ENCODE measurements at regions of chr5 and their contacts with region 1.

Region 1: GRCh38 chr5:73201547-73202513 is 28.8 kb downstream of the TMEM174 start:
- DNase-seq: peak; percentile 21 to 89 (median 72)

Region 2: DNA sequence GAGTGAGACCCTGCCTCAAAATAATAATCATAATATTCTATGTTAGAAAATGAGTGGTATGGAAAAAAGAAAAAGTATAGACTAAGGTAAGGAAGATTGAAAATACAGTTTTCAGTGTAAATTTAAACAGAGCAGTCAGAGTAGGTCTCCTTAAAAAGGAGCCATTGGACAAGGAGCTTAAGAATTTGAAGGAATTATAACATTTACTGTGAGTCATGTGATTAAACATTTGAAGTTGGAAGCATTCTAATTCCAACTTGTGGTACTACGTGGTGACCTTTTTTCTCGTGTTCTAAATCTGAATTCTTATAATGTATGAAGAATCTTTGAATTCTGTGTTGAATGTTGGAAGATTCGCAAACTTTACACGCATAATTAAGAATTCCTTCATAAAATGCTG is 120.7 kb before region 1 on chr5:
- intact Hi-C with region 1: loop called (anchors 5 kb)
- DNase-seq: no peak

Region 3: GRCh38 chr5:73482383-73483136 is 280.7 kb after region 1 on chr5:
- intact Hi-C with region 1: no loop called
- DNase-seq: no peak

Measured in head of caudate nucleus (tissue), 42 donors.